Gastrocnemius medialis (tissue), 4 donors: ENCODE measurements at regions of chr6 and their contacts with region 1.

Region 1: GRCh38 chr6:31958741-31959739 is at the starts of genes NELFE and SKIC2:
- DNase-seq: peak; percentile 95 to 98
- ATAC-seq: peak; percentile 98 to 99
- H3K4me3 ChIP-seq: peak within 1 kb of the TSS; percentile 82 to 94 (median 88)
- H3K27ac ChIP-seq: peak within 1 kb of the TSS; percentile 82 to 89 (median 87)
- H3K4me1 ChIP-seq: peaks cover 17 to 20% of the 10 kb centered on the region in 2 donors
- H3K27me3 ChIP-seq: no peaks in the 10 kb centered on the region
- CTCF ChIP-seq: no peak
- POLR2A ChIP-seq: peak; percentile 72 to 76
- total RNA-seq, gene NELFE: 58.1 to 88.6 (median 78.7) TPM
- total RNA-seq, gene SKIC2: 21.2 to 51.9 (median 22.7) TPM

Region 2: GRCh38 chr6:30556066-30556905 is 1402.8 kb before region 1 on chr6 and contains the start of gene GNL1:
- in situ Hi-C with region 1: no loop called
- intact Hi-C with region 1: loop called (anchors 10 kb)
- DNase-seq: peak; percentile 80 to 92
- ATAC-seq: peak; percentile 77 to 79
- H3K4me3 ChIP-seq: peak within 1 kb of the TSS; percentile 87 to 99 (median 96)
- H3K27ac ChIP-seq: peak within 1 kb of the TSS; percentile 91 to 99 (median 95)
- H3K4me1 ChIP-seq: peaks cover 11 to 18% of the 10 kb centered on the region in 2 donors
- H3K27me3 ChIP-seq: no peaks in the 10 kb centered on the region
- CTCF ChIP-seq: peak in 1 of 5 experiments; percentile 15
- POLR2A ChIP-seq: peak; percentile 34 to 38
- total RNA-seq, gene GNL1: 13.2 to 16.0 (median 14.9) TPM

Region 3: GRCh38 chr6:31546962-31547726 is 411.9 kb before region 1 on chr6 and contains the start of gene NFKBIL1:
- in situ Hi-C with region 1: loop called in 1 of 4 experiments (anchors 10 kb)
- intact Hi-C with region 1: loop called (anchors 5 kb)
- DNase-seq: peak; percentile 96
- ATAC-seq: peak; percentile 97 to 98
- H3K4me3 ChIP-seq: peak within 1 kb of the TSS; percentile 48 to 72 (median 63)
- H3K27ac ChIP-seq: peak within 1 kb of the TSS; percentile 86 to 97 (median 90)
- H3K4me1 ChIP-seq: peaks cover 20 to 22% of the 10 kb centered on the region in 2 donors
- H3K27me3 ChIP-seq: no peaks in the 10 kb centered on the region
- CTCF ChIP-seq: peak in 1 of 5 experiments; percentile 13
- POLR2A ChIP-seq: peak; percentile 64 to 68
- total RNA-seq, gene NFKBIL1: 17.6 to 21.7 (median 20.3) TPM

Region 4: GRCh38 chr6:31665501-31666336 is 293.3 kb before region 1 on chr6 and contains the start of gene CSNK2B:
- in situ Hi-C with region 1: loop called in 1 of 4 experiments (anchors 25 kb)
- intact Hi-C with region 1: no loop called
- DNase-seq: peak; percentile 99
- ATAC-seq: peak; percentile 86
- H3K4me3 ChIP-seq: peak within 1 kb of the TSS; percentile 83 to 98 (median 94)
- H3K27ac ChIP-seq: peak within 1 kb of the TSS; percentile 93 to 100 (median 97)
- H3K4me1 ChIP-seq: peaks cover 25 to 36% of the 10 kb centered on the region in 2 donors
- H3K27me3 ChIP-seq: no peaks in the 10 kb centered on the region
- CTCF ChIP-seq: peak in 1 of 5 experiments; percentile 19
- POLR2A ChIP-seq: peak; percentile 72
- total RNA-seq, gene CSNK2B: 185 to 251 (median 226) TPM

Region 5: GRCh38 chr6:31888276-31889258 is 70.5 kb before region 1 on chr6:
- in situ Hi-C with region 1: no loop called
- intact Hi-C with region 1: no loop called
- DNase-seq: no peak
- ATAC-seq: no peak
- H3K4me3 ChIP-seq: no peak overlapping the region
- H3K27ac ChIP-seq: no peak overlapping the region
- H3K4me1 ChIP-seq: no peaks in the 10 kb centered on the region
- H3K27me3 ChIP-seq: no peaks in the 10 kb centered on the region
- CTCF ChIP-seq: peak; percentile 10 to 61 (median 55)
- POLR2A ChIP-seq: no peak

Region 6: GRCh38 chr6:31901953-31902643 is 56.9 kb before region 1 on chr6 and contains the start of gene ZBTB12:
- in situ Hi-C with region 1: loop called in 2 of 4 experiments (anchors 10 kb)
- intact Hi-C with region 1: loop called (anchors 2 kb)
- DNase-seq: peak; percentile 78 to 82
- ATAC-seq: peak; percentile 58 to 65
- H3K4me3 ChIP-seq: peak within 1 kb of the TSS; percentile 56 to 93 (median 80)
- H3K27ac ChIP-seq: peak within 1 kb of the TSS; percentile 78 to 89 (median 86)
- H3K4me1 ChIP-seq: peaks cover 15 to 19% of the 10 kb centered on the region in 2 donors
- H3K27me3 ChIP-seq: no peaks in the 10 kb centered on the region
- CTCF ChIP-seq: peak in 1 of 5 experiments; percentile 20
- POLR2A ChIP-seq: peak; percentile 22 to 33
- total RNA-seq, gene ZBTB12: 0.26 TPM in 1 of 4 donors, not detected in the others

Region 7: DNA sequence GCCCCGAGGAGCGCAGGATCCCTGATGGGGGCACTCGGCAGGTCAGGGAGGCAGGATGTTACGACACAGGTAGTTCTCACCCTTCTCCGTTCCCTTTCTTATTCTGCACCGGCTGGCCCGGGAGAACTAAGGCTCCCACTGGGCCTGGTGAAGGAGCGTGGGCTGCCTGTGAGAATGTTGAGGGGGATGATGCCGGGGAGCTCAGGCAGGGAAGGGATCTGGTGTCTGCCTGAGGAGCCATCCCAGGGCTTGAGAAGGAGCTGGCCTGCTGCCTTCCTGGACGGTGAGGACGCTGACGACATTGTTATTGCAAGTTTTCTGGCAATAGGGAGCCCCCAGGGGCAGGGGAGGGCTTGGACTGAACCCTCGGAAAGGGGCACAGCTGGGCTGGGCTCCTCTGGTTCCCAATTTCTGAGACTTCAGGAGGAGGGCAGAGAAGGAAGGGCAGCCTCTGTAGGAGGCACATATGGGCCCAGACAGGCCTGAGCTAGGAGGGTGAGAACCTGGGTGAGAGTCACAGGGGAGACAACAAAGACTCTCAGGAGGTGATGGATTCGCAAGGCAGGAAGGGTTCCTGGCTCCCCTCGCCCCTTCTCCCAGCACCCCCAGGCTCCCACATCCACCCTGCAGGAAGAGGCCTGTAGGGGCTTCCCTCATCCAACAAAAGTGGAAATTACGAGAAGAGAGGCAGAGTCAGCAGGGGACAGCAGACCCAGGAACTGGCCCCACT is 111.9 kb after region 1 on chr6:
- in situ Hi-C with region 1: loop called in 1 of 4 experiments (anchors 25 kb)
- intact Hi-C with region 1: no loop called
- DNase-seq: peak in 1 of 2 donors; percentile 66
- ATAC-seq: peak; percentile 62 to 75
- H3K4me3 ChIP-seq: no peak overlapping the region
- H3K27ac ChIP-seq: peak overlapping the region; percentile 54 to 65 (median 57)
- H3K4me1 ChIP-seq: no peaks in the 10 kb centered on the region
- H3K27me3 ChIP-seq: no peaks in the 10 kb centered on the region
- CTCF ChIP-seq: no peak
- POLR2A ChIP-seq: no peak

Region 8: GRCh38 chr6:32195652-32195901 is 236.5 kb after region 1 on chr6:
- in situ Hi-C with region 1: loop called in 1 of 4 experiments (anchors 25 kb)
- intact Hi-C with region 1: loop called (anchors 2 kb)
- DNase-seq: peak; percentile 100
- ATAC-seq: peak in 1 of 2 donors; percentile 83
- H3K4me3 ChIP-seq: peak overlapping the region in 3 of 4 donors; percentile 67 to 86 (median 74)
- H3K27ac ChIP-seq: peak overlapping the region; percentile 91 to 98 (median 96)
- H3K4me1 ChIP-seq: peaks cover 28 to 32% of the 10 kb centered on the region in 2 donors
- H3K27me3 ChIP-seq: no peaks in the 10 kb centered on the region
- CTCF ChIP-seq: peak in 4 of 5 experiments; percentile 54 to 70 (median 56)
- POLR2A ChIP-seq: no peak

Region 9: DNA sequence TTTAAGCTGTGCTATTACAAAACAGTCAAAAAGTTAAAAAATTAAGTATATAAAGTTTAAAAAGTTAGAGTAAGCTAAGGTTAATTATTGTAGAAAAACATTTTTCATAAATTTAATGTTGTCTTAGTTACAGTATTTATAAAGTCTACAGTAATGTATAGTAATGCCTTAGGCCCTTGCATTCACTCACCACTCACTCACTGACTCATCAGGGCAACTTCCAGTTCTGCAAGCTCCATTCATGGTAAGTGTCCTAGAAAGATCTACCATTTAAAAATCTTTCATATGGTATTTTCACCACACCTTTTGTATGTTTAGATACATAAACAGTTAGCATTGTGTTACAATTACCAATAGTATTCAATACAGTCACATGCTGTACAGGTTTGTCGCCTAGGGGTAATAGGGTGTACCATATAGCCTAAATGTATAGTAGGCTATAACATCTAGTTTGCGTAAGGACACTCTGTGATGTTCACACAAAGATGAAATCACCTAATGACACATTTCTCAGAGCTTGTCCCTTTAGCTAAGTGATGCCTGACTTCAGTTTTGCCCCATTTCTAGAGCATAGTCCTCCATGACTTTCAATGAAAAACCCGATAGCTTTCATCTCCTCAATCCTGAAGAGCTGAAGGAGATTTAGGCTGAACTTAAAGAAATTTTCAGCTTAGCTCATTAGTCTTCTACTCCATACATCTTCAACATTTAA is 465.7 kb after region 1 on chr6:
- in situ Hi-C with region 1: no loop called
- intact Hi-C with region 1: no loop called
- DNase-seq: no peak
- ATAC-seq: no peak
- H3K4me3 ChIP-seq: no peak overlapping the region
- H3K27ac ChIP-seq: no peak overlapping the region
- H3K4me1 ChIP-seq: no peaks in the 10 kb centered on the region
- H3K27me3 ChIP-seq: peaks cover 2 to 9% (median 4%) of the 10 kb centered on the region in 3 donors
- CTCF ChIP-seq: no peak
- POLR2A ChIP-seq: no peak